B cell (primary cell): ENCODE measurements at regions of chr17 and their contacts with region 1.

Region 1: DNA sequence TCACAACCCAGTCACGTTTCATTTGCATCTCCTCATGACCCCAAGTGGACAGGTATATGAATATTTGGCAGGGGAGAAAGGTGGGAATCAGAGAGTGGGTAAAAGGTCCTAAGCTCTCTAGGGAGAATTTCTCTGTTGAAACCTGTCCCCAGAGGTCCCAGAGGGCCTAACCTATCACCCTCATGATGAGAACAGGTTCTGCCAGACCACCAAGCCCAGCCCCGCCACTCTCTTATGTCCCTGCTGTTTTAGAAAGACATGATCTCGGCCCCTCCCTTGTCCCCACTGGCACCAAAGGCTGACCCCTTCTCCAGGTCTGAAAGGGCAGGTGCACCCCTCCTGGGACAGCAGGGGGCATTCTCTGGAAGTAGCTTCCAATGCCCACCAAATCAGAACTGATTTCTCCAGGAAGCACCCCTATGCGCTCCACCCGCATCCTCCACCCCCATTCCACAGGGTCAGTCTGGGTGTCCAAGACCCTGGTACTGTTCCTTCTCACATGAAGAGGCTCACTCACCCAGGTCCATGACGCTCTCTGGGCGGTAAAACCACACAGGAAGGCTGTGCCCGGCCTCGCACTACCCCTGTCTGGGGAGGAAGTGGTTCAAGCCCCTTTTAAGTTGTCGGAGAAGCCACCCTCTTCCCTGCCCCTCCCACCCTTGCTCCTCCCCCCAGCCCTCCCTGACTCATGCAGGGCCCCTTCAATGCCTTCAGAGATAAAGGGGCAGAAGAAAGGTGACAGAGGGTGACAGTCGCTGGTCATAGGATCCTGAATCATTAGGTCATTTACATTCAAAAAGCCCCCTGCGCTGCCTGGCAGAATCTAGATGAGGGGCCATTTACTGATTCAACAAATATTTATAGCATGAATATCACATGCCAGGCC is at the start of gene CCR7:
- DNase-seq: peak; percentile 92
- ATAC-seq: peak; percentile 69
- H3K4me3 ChIP-seq: peak within 1 kb of the TSS; percentile 63 to 94 (median 89)
- H3K4me3 Mint-ChIP-seq: peak within 1 kb of the TSS; percentile 92
- H3K27ac ChIP-seq: peak within 1 kb of the TSS; percentile 92 to 98
- H3K27ac Mint-ChIP-seq: peak within 1 kb of the TSS; percentile 94
- H3K4me1 ChIP-seq: peaks cover 58 to 67% of the 10 kb centered on the region in 2 donors
- H3K4me1 Mint-ChIP-seq: peaks cover 51% of the 10 kb centered on the region
- H3K27me3 ChIP-seq: no peaks in the 10 kb centered on the region
- H3K27me3 Mint-ChIP-seq: no peaks in the 10 kb centered on the region
- CTCF ChIP-seq: no peak
- total RNA-seq, gene CCR7: 451 and 481 TPM in 2 replicates

Region 2: GRCh38 chr17:40582328-40582901 is 17.3 kb after region 1 on chr17:
- CTCF ChIA-PET with region 1: interaction called, 51 read pairs
- POLR2A ChIA-PET with region 1: interaction called, 11 read pairs
- intact Hi-C with region 1: loop called (anchors 1 kb)
- DNase-seq: peak; percentile 84
- ATAC-seq: peak; percentile 76
- H3K4me3 ChIP-seq: peak overlapping the region in 3 of 5 experiments; percentile 15 to 52 (median 40)
- H3K4me3 Mint-ChIP-seq: peak overlapping the region; percentile 68
- H3K27ac ChIP-seq: peak overlapping the region; percentile 85 to 87
- H3K27ac Mint-ChIP-seq: peak overlapping the region; percentile 77
- H3K4me1 ChIP-seq: peaks cover 66 to 68% of the 10 kb centered on the region in 2 donors
- H3K4me1 Mint-ChIP-seq: peaks cover 83% of the 10 kb centered on the region
- H3K27me3 ChIP-seq: no peaks in the 10 kb centered on the region
- H3K27me3 Mint-ChIP-seq: no peaks in the 10 kb centered on the region
- CTCF ChIP-seq: no peak